ENCODE measurements at regions of chr3 and their contacts with region 1.

Region 1: DNA sequence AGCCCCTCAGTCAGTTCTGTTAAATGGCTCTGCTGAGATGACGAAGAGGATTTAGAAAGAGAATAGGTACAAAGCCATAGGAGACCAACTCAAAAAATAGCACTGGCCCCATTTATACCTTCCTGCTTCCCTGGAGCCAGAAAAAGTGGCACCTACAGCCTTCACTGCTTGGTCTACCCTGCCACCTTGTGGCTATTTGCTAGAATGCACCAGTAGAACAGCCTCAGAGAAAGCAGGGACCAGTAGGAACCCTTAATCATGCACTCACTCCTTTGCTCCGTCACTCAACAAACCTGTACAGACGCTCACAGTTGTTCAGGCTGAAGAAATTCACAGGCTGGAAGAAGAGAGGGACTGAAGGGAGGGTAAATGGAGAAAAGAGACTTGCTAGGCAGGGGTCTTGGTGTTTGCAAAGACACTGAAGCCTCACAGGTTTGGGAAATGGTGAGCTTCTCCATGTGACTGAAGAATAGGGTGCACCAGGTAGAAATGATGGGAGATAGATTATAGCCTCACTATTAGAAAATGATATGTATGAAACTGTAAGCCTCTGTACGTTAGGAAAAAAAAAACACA is 12.1 kb upstream of the RTP2 start:
- DNase-seq: peak; percentile 60 to 80
- ATAC-seq: peak; percentile 70 to 82
- H3K4me3 ChIP-seq: no peak overlapping the region
- H3K27ac ChIP-seq: peak overlapping the region in 3 of 4 donors; percentile 43 to 67 (median 47)
- H3K4me1 ChIP-seq: peaks cover 17 to 24% of the 10 kb centered on the region in 2 donors
- H3K27me3 ChIP-seq: no peaks in the 10 kb centered on the region
- CTCF ChIP-seq: peak; percentile 94 to 96 (median 95)
- POLR2A ChIP-seq: no peak

Region 2: GRCh38 chr3:187616307-187616972 is 98.1 kb before region 1 on chr3:
- in situ Hi-C with region 1: loop called in 3 of 4 experiments (anchors 5 to 10 kb)
- intact Hi-C with region 1: loop called (anchors 1 kb)
- DNase-seq: peak in 1 of 2 donors; percentile 26
- ATAC-seq: peak; percentile 50 to 56
- H3K4me3 ChIP-seq: no peak overlapping the region
- H3K27ac ChIP-seq: no peak overlapping the region
- H3K4me1 ChIP-seq: no peaks in the 10 kb centered on the region
- H3K27me3 ChIP-seq: no peaks in the 10 kb centered on the region
- CTCF ChIP-seq: peak; percentile 37 to 78 (median 70)
- POLR2A ChIP-seq: no peak

Region 3: GRCh38 chr3:187777331-187777941 is 62.9 kb after region 1 on chr3:
- in situ Hi-C with region 1: no loop called
- intact Hi-C with region 1: no loop called
- DNase-seq: no peak
- ATAC-seq: no peak
- H3K4me3 ChIP-seq: no peak overlapping the region
- H3K27ac ChIP-seq: no peak overlapping the region
- H3K4me1 ChIP-seq: peaks cover 0 to 5% of the 10 kb centered on the region in 2 donors
- H3K27me3 ChIP-seq: no peaks in the 10 kb centered on the region
- CTCF ChIP-seq: no peak
- POLR2A ChIP-seq: no peak

Region 4: DNA sequence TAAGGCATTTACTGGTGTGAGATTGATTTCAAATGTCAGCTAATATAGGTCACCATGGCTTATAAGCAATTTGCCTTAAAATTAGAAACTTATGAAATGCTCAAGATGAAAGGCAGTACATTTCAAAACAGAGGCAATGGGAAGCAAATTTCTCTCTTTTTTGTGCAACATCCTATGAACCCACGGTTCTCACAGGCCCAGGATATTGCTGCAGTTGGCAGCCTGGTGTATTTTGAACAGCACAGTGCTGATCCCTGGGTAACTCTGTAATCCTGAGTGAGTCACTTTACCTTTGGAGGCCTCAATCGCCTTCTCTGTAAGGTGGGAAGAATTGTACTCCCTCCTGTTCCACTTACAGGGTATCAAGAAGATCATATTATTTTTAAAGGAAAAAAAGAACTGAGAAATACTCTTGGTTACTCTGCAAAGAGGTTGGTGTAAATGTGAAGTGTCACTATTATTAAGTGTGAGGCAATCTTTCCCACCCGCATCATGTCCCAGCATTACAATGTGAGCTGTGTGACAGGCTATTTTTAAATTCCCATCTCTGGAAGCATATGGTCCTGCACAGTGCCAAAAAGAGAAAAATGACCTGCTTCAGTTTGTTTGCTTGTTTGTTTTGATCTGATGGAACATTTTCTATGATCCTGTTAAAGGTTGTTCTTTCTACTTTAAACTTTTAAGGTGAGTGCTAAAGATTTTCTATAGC is 249.3 kb after region 1 on chr3:
- in situ Hi-C with region 1: no loop called
- intact Hi-C with region 1: no loop called
- DNase-seq: peak; percentile 44 to 64
- ATAC-seq: peak; percentile 91 to 94
- H3K4me3 ChIP-seq: no peak overlapping the region
- H3K27ac ChIP-seq: peak overlapping the region; percentile 88 to 95 (median 90)
- H3K4me1 ChIP-seq: peaks cover 40 to 62% of the 10 kb centered on the region in 2 donors
- H3K27me3 ChIP-seq: no peaks in the 10 kb centered on the region
- CTCF ChIP-seq: no peak
- POLR2A ChIP-seq: no peak